ENCODE measurements at regions of chr11 and their contacts with region 1.

Region 1: GRCh38 chr11:76835928-76836612 is 24.6 kb upstream of the ACER3 start:
- DNase-seq: no peak
- ATAC-seq: peak; percentile 49
- H3K4me3 ChIP-seq: no peak overlapping the region
- H3K27ac ChIP-seq: no peak overlapping the region
- H3K4me1 ChIP-seq: peaks cover 3% of the 10 kb centered on the region; the same call in 1 of the 2 replicates
- H3K27me3 ChIP-seq: peaks cover 3% of the 10 kb centered on the region; the same call in 1 of the 2 replicates
- CTCF ChIP-seq: peak; percentile 24; the same call in 1 of the 2 replicates

Region 2: GRCh38 chr11:76588455-76589325 is 247.4 kb before region 1 on chr11:
- CTCF ChIA-PET with region 1: no interaction called
- POLR2A ChIA-PET with region 1: no interaction called
- in situ Hi-C with region 1: no loop called
- intact Hi-C with region 1: no loop called
- DNase-seq: no peak
- ATAC-seq: peak; percentile 55
- H3K4me3 ChIP-seq: no peak overlapping the region
- H3K27ac ChIP-seq: no peak overlapping the region
- H3K4me1 ChIP-seq: no peaks in the 10 kb centered on the region
- H3K27me3 ChIP-seq: no peaks in the 10 kb centered on the region
- CTCF ChIP-seq: no peak

Region 3: DNA sequence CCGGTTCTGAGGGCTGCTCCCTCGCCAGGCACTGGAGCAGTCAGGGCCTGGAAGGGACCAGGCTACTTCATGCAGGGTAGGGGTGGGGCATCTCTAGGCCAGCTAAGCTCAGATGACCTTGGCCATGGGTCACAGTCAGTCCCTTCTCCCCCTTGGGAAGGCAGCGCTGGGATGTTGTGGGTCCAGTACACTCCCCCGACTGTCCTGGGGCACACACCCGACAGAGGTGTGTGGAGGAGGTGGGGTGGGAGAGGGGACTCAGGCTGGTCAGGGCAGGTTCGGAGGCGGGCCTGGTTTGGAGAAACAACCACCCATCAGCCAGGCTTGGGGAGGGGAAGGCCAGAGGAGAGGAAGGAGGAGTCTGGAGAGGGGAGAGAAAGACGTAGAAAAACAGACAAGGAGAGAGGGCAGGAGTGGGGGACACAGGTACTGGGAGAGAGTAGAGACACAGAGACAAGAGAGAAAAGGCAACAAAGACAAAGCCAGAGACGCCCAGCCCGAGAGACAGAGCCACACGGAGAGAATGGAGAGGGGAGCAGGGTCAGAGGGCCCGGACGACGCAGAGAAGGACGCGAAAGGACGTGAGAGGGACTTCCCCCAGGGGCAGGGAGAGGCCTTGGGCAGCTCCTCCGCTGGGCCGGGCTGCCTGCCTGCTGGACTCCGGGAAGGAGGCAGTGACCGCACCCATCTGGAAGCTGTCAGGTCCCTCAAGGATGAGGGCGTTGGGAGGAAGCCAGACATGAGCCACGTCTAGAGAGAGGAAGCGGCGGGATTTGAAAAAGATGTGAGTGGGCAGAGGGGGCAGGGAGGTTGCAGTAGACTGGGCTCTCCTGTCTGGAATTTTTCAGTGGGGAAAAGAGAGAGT is 83.5 kb before region 1 on chr11:
- CTCF ChIA-PET with region 1: no interaction called
- POLR2A ChIA-PET with region 1: no interaction called
- in situ Hi-C with region 1: no loop called
- intact Hi-C with region 1: no loop called
- DNase-seq: no peak
- ATAC-seq: 0 out of 2 replicates have a peak, but pooled peaks have one; percentile 17
- H3K4me3 ChIP-seq: no peak overlapping the region
- H3K27ac ChIP-seq: no peak overlapping the region
- H3K4me1 ChIP-seq: no peaks in the 10 kb centered on the region
- H3K27me3 ChIP-seq: no peaks in the 10 kb centered on the region
- CTCF ChIP-seq: no peak

Region 4: DNA sequence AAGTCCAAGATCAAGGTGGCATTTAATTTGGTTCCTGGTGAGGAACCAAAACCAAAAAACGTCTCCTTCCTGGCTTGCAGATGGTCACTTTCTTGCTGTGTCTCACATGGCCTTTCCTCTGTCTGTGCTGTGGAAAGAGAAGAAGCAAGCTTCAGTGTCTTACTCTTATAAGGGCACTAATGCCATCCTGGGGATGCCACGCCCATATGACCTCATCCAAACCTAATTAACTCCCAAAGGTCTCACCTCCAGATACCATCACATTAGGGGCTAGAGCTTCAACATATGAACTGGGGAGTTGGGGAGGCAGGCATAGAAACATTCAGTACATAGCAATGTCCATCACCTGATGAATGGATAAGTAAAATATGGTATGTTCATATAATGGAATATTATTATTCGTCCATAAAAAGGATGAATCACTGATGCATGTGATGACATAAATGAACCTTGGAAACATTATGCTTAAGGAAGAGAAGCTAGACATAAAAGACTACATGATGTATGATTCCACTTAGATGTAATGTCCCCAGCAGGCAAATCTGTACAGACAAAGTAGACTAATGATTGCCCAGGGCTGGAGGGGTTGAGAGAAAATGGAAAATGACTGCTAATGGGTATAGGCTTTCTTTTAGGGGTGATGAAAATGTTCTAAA is 119.5 kb after region 1 on chr11:
- CTCF ChIA-PET with region 1: interaction called, 5 read pairs
- POLR2A ChIA-PET with region 1: interaction called, 3 read pairs
- in situ Hi-C with region 1: loop called (anchors 10 kb)
- intact Hi-C with region 1: no loop called
- DNase-seq: no peak
- ATAC-seq: no peak
- H3K4me3 ChIP-seq: no peak overlapping the region
- H3K27ac ChIP-seq: no peak overlapping the region
- H3K4me1 ChIP-seq: no peaks in the 10 kb centered on the region
- H3K27me3 ChIP-seq: no peaks in the 10 kb centered on the region
- CTCF ChIP-seq: no peak

Measured in Panc1 (cell line).